ENCODE measurements at regions of chr5 and their contacts with region 1.

Region 1: GRCh38 chr5:123460296-123460729 is 37.1 kb upstream of the CEP120 start:
- DNase-seq: peak; percentile 70
- H3K4me3 Mint-ChIP-seq: peak overlapping the region; percentile 6
- H3K27ac Mint-ChIP-seq: peak overlapping the region; percentile 81
- H3K4me1 Mint-ChIP-seq: peaks cover 8% of the 10 kb centered on the region
- H3K27me3 Mint-ChIP-seq: no peaks in the 10 kb centered on the region

Region 2: GRCh38 chr5:123423278-123424149 is 36.8 kb before region 1 on chr5 and contains the start of gene CEP120:
- intact Hi-C with region 1: loop called (anchors 1 kb)
- DNase-seq: peak; percentile 99
- H3K4me3 Mint-ChIP-seq: no peak within 1 kb of the TSS
- H3K27ac Mint-ChIP-seq: no peak within 1 kb of the TSS
- H3K4me1 Mint-ChIP-seq: peaks cover 17% of the 10 kb centered on the region
- H3K27me3 Mint-ChIP-seq: no peaks in the 10 kb centered on the region
- total RNA-seq, gene CEP120: 28.6 and 31.6 TPM in 2 replicates

Region 3: GRCh38 chr5:123438902-123439301 is 21.4 kb before region 1 on chr5:
- intact Hi-C with region 1: loop called (anchors 1 kb)
- DNase-seq: peak; percentile 78
- H3K4me3 Mint-ChIP-seq: peak overlapping the region; percentile 32
- H3K27ac Mint-ChIP-seq: peak overlapping the region; percentile 87
- H3K4me1 Mint-ChIP-seq: peaks cover 27% of the 10 kb centered on the region
- H3K27me3 Mint-ChIP-seq: no peaks in the 10 kb centered on the region

Region 4: GRCh38 chr5:123448017-123448617 is 12.2 kb before region 1 on chr5:
- intact Hi-C with region 1: loop called (anchors 1 kb)
- DNase-seq: peak; percentile 81
- H3K4me3 Mint-ChIP-seq: peak overlapping the region; percentile 36
- H3K27ac Mint-ChIP-seq: peak overlapping the region; percentile 83
- H3K4me1 Mint-ChIP-seq: peaks cover 35% of the 10 kb centered on the region
- H3K27me3 Mint-ChIP-seq: peaks cover 10% of the 10 kb centered on the region

Region 5: DNA sequence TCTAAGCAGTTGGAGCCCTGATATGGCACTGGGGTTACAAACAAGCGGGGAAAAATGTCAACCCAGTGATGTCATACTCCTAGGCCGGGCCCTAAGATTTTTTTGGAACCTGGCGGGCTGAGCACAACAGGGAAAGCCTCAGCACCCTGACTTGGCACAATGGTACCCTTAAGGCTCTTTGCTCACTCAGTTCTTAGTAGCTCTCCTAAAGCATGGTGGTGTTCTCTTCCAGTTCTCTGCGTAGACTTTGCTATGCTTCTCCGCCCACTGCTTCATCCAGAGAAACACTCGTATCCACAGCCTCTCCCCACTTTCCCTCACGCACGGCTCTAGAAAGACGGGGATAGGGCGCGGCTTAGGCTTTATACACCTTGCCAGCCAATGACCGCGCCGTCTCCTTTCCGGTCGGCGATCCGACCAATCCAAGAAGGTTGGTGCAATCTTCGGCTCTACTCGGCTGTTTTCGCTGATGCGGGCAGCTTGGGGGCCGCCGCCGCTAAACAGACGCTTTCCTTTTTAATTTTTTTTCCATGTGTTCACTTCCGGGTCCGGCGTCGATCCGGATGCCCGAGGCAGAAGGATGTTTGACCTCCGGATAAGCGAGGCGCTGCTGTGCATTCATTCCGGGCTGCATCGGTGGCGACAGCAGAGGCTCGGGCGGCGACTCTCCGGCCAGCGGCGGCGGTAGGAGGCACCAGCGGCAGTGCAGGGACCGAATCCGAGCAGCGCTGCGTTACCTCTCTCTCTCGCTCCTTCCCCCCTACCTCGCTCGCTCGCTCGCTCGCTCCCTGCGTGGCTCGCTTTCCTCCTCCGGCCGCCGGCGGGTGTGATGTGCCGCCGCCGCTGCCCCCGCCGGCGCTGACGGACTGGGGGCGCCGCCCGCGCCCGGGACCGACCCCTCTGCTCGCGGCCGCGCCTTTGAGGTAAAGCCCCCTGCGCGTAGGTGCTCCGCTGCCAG is 51.6 kb after region 1 on chr5 and contains the start of gene CSNK1G3:
- intact Hi-C with region 1: loop called (anchors 1 kb)
- DNase-seq: peak; percentile 97
- H3K4me3 Mint-ChIP-seq: peak within 1 kb of the TSS; percentile 90
- H3K27ac Mint-ChIP-seq: peak within 1 kb of the TSS; percentile 99
- H3K4me1 Mint-ChIP-seq: peaks cover 35% of the 10 kb centered on the region
- H3K27me3 Mint-ChIP-seq: peaks cover 11% of the 10 kb centered on the region
- total RNA-seq, gene CSNK1G3: 36.6 and 40.0 TPM in 2 replicates

Region 6: DNA sequence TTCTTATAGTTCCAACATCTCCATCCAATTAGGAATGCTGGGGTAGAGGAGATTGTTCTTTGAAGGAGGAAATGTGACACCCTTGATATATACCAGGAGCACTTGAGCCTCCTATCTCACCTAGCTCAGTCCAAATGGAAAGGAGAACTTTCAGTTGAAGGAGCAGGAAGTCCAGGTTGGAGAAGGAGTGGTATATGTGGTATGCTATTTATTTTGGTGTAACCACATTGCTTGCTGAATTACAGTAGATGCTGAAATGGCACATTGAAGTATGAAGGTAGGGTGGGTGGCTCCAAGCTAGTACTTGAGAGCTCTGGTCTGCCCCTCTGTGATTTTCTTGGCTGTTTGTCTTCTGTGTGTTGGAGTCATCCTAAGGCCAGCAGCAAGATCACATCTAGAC is 57.8 kb after region 1 on chr5:
- intact Hi-C with region 1: loop called (anchors 1 kb)
- DNase-seq: no peak
- H3K4me3 Mint-ChIP-seq: no peak overlapping the region
- H3K27ac Mint-ChIP-seq: no peak overlapping the region
- H3K4me1 Mint-ChIP-seq: peaks cover 47% of the 10 kb centered on the region
- H3K27me3 Mint-ChIP-seq: no peaks in the 10 kb centered on the region

Region 7: DNA sequence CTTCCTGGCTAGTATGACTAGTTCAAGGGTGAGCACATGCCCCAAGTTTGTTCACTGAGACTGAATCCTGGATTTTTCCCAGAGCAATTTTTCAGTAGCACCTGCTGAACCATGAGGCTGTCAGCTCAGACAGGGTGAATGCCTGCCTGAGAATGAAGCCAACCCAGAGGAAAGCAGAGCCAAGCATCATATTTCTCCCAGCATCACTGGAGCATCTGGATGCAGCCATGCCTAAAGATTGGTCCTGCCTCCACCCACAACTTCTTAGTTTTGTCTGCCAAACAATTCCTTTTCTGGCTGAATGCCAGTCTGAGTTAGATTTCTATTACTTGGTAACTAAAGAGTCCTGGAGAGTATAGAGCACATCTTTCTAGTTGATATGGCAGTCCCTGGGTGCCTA is 395.3 kb after region 1 on chr5:
- intact Hi-C with region 1: no loop called
- DNase-seq: no peak
- H3K4me3 Mint-ChIP-seq: no peak overlapping the region
- H3K27ac Mint-ChIP-seq: no peak overlapping the region
- H3K4me1 Mint-ChIP-seq: no peaks in the 10 kb centered on the region
- H3K27me3 Mint-ChIP-seq: no peaks in the 10 kb centered on the region